H1 (cell line): ENCODE measurements at regions of chr5 and their contacts with region 1.

Region 1: DNA sequence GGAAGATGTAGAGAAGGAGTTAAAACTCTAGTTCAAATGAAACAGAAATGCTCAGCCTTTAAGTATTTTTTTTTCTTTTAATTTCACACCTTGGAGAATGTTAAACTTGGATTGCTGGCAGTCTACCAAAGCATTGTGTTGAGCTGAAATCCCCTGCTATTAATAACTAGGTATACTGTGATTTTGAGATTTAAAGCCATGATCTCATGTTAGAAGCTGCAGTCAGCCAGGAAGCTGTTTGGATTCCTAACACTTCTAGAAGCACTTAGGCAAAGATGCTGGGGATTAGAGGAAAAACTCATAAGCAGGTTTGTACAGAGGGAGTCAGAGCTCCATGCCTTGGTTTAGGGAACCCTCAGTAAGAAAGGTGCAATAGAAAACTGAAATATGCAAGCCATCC is 141.4 kb downstream of the KIF4B start:
- DNase-seq: no peak
- H3K4me3 ChIP-seq: no peak overlapping the region
- H3K27ac ChIP-seq: no peak overlapping the region
- H3K4me1 ChIP-seq: no peaks in the 10 kb centered on the region
- H3K27me3 ChIP-seq: no peaks in the 10 kb centered on the region
- CTCF ChIP-seq: no peak
- EP300 ChIP-seq: no peak
- POLR2A ChIP-seq: no peak
- RAD21 ChIP-seq: no peak

Region 2: GRCh38 chr5:155136216-155136850 is 18.6 kb before region 1 on chr5:
- CTCF ChIA-PET with region 1: interaction called, 11 read pairs
- POLR2A ChIA-PET with region 1: no interaction called
- DNase-seq: no peak
- H3K4me3 ChIP-seq: no peak overlapping the region
- H3K27ac ChIP-seq: no peak overlapping the region
- H3K4me1 ChIP-seq: peaks cover 0 to 5% (median 0%) of the 10 kb centered on the region in 4 experiments; a peak in 2 of 7 replicates
- H3K27me3 ChIP-seq: no peaks in the 10 kb centered on the region
- CTCF ChIP-seq: no peak
- EP300 ChIP-seq: no peak
- POLR2A ChIP-seq: no peak
- RAD21 ChIP-seq: no peak